Naive thymus-derived CD4-positive, alpha-beta T cell (primary cell): ENCODE measurements at regions of chr2 and their contacts with region 1.

Region 1: GRCh38 chr2:61764035-61764800 is 89.6 kb downstream of the FAM161A start:
- DNase-seq: peak; percentile 89 to 98 (median 97)
- ATAC-seq: peak; percentile 99
- H3K4me3 ChIP-seq: peak overlapping the region; percentile 71
- H3K4me3 Mint-ChIP-seq: peak overlapping the region; percentile 80 to 98 (median 95)
- H3K27ac ChIP-seq: peak overlapping the region; percentile 93
- H3K27ac Mint-ChIP-seq: peak overlapping the region; percentile 94 to 99 (median 98)
- H3K4me1 ChIP-seq: peaks cover 6 to 9% of the 10 kb centered on the region in 2 donors
- H3K4me1 Mint-ChIP-seq: peaks cover 0 to 16% (median 10%) of the 10 kb centered on the region in 7 donors
- H3K27me3 ChIP-seq: no peaks in the 10 kb centered on the region
- H3K27me3 Mint-ChIP-seq: peaks cover 0 to under 1% (median 0%) of the 10 kb centered on the region in 5 donors

Region 2: DNA sequence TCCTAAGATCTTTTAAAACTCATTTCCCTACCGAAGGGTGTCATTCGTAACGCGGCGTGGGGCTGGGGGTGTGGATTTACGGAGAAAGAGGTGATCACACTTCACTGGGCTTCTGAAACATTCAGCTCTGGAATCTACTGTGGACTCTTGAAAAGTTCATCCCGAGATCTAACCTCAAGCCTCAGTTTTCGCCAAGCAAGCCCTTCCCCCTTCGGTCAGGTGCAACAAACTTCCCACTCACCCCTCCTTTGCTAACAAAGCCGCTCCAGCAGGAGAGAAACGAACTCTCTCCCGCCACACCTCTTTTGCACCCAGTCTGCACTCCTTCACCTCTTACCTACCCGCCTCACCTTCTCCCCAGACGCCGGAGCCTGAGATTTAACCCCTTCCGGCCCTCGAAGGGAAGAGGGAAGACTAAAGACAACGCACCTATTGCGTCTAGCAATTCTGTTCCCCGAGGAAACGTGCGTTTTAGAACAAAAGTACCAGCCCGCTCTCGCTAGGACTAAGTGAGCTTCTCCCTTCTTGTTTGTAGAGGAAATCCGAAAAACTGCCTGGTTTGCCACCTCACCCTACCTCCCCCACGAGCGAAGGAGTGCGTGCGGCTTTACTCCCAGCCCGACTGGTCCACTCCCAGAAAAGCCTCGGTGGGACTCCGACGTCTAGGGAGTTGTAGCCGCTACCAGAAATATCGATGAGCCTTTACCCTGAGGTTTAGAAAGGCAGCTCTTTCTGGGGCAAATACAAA is 747.2 kb before region 1 on chr2:
- CTCF ChIA-PET with region 1: no interaction called
- POLR2A ChIA-PET with region 1: no interaction called
- intact Hi-C with region 1: loop called in 1 of 2 experiments (anchors 1 kb)
- DNase-seq: peak; percentile 41 to 75 (median 72)
- ATAC-seq: peak; percentile 79
- H3K4me3 ChIP-seq: peak overlapping the region; percentile 100
- H3K4me3 Mint-ChIP-seq: peak overlapping the region; percentile 93 to 100 (median 97)
- H3K27ac ChIP-seq: peak overlapping the region; percentile 75
- H3K27ac Mint-ChIP-seq: peak overlapping the region; percentile 90 to 99 (median 95)
- H3K4me1 ChIP-seq: peaks cover 14 to 20% of the 10 kb centered on the region in 2 donors
- H3K4me1 Mint-ChIP-seq: peaks cover 23 to 68% (median 48%) of the 10 kb centered on the region in 7 donors
- H3K27me3 ChIP-seq: no peaks in the 10 kb centered on the region
- H3K27me3 Mint-ChIP-seq: no peaks in the 10 kb centered on the region

Region 3: DNA sequence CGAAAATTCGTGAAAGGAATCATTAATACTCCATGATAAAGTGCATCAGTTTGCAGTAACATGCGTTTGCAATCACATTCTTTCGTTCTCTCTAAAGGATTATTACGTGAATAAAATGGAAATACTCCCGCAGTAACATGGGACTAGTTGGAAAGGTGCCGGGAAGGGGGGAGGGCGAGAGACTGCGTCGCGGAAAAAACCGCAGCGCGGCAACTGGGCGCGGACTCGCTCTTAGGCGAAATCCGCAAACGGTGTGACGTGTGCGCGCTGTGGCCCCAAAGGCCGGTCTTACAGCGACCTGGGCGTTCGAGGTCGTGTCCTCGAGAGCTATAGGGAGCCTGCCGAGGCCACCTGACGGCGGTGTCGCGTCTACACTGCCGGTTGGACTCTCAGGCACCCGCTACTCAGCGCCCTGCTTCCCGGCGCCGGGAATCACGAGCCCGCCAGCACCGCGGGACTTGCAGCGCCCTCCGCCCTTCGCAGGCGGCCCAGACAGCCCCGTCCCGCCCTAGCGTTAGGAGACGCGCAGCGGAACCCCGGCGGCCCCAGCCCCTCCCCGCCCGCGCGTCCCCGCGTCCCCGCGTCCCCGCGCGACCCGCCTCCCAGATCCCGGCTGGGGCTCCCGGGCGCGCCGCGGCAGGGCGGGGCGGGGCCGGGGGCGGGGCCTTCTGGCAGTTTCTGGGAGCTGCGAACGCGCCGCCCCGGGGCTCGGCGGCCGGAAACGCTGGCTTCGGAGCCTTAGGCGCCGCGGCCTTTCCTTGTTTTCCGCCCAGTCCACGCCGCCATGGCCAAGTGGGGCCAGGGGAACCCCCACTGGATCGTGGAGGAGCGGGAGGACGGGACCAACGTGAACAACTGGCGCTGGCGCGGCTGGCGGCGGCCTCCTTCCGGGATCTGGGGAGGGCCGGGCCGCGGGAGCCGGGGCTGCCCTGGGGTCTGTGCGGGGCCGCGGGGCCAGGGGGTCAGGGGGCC is 587.2 kb before region 1 on chr2:
- CTCF ChIA-PET with region 1: no interaction called
- POLR2A ChIA-PET with region 1: no interaction called
- intact Hi-C with region 1: loop called (anchors 1 kb)
- DNase-seq: peak; percentile 89 to 97 (median 93)
- ATAC-seq: peak; percentile 95
- H3K4me3 ChIP-seq: peak overlapping the region; percentile 82
- H3K4me3 Mint-ChIP-seq: peak overlapping the region; percentile 90 to 100 (median 94)
- H3K27ac ChIP-seq: peak overlapping the region; percentile 97
- H3K27ac Mint-ChIP-seq: peak overlapping the region; percentile 89 to 97 (median 95)
- H3K4me1 ChIP-seq: peaks cover 27 to 41% of the 10 kb centered on the region in 2 donors
- H3K4me1 Mint-ChIP-seq: peaks cover 38 to 53% (median 48%) of the 10 kb centered on the region in 7 donors
- H3K27me3 ChIP-seq: no peaks in the 10 kb centered on the region
- H3K27me3 Mint-ChIP-seq: peaks cover 0 to 8% (median 0%) of the 10 kb centered on the region in 5 donors

Region 4: GRCh38 chr2:61694312-61695274 is 69.6 kb before region 1 on chr2:
- CTCF ChIA-PET with region 1: no interaction called
- POLR2A ChIA-PET with region 1: no interaction called
- intact Hi-C with region 1: loop called (anchors 1 kb)
- DNase-seq: peak; percentile 62 to 91 (median 77)
- ATAC-seq: peak; percentile 99
- H3K4me3 ChIP-seq: peak overlapping the region; percentile 74
- H3K4me3 Mint-ChIP-seq: peak overlapping the region; percentile 84 to 96 (median 91)
- H3K27ac ChIP-seq: peak overlapping the region; percentile 62
- H3K27ac Mint-ChIP-seq: peak overlapping the region; percentile 74 to 92 (median 87)
- H3K4me1 ChIP-seq: peaks cover 0 to 5% of the 10 kb centered on the region in 2 donors
- H3K4me1 Mint-ChIP-seq: peaks cover 4 to 19% (median 15%) of the 10 kb centered on the region in 7 donors
- H3K27me3 ChIP-seq: no peaks in the 10 kb centered on the region
- H3K27me3 Mint-ChIP-seq: peaks cover 0 to 4% (median 0%) of the 10 kb centered on the region in 5 donors

Region 5: DNA sequence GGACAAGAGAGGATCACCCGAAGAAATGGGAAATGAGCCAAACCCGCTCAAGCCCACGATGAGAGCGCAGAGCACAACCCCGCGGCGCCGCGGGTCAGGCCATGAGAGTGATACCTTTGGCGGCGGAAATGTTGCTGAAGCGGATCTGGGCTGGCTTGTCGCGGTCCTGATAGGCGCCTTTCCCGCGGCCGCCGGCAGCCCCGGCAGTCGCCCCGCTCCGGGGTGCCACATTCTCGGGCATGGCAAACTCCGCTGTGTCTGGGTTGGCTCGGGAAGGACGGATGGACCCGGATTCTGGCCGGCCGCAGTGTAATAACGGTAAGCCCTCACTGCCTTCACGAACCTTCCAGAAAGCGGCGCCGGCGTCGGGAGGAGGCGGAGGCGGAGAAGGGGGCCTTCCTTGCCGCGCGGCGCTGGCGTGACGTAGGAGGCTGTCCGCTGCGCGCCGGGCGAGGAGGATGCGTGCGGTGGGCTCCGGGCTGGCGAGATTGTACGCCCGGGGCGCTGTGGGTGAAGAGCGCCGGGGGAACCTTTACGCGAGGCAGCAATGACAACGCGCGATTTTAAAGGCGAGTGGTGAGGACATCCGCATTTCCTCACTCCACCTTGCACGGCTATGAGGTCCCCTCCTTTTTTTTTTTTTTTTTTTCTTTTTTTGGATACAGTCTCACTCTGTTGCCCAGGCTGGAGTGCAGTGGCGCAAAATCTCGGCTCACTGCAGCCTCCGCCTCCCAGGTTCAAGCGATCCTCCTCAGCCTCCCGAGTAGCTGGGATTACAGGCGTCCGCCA is 124.2 kb after region 1 on chr2 and contains the start of gene CCT4:
- CTCF ChIA-PET with region 1: no interaction called
- POLR2A ChIA-PET with region 1: interaction called, 4 read pairs
- intact Hi-C with region 1: loop called (anchors 1 kb)
- DNase-seq: peak; percentile 86 to 99 (median 95)
- ATAC-seq: peak; percentile 94
- H3K4me3 ChIP-seq: peak within 1 kb of the TSS; percentile 92
- H3K4me3 Mint-ChIP-seq: peak within 1 kb of the TSS; percentile 85 to 100 (median 99)
- H3K27ac ChIP-seq: peak within 1 kb of the TSS; percentile 98
- H3K27ac Mint-ChIP-seq: peak within 1 kb of the TSS; percentile 98 to 100 (median 100)
- H3K4me1 ChIP-seq: peaks cover 15 to 17% of the 10 kb centered on the region in 2 donors
- H3K4me1 Mint-ChIP-seq: peaks cover 11 to 34% (median 29%) of the 10 kb centered on the region in 7 donors
- H3K27me3 ChIP-seq: no peaks in the 10 kb centered on the region
- H3K27me3 Mint-ChIP-seq: no peaks in the 10 kb centered on the region
- total RNA-seq, gene CCT4: 84.2 to 177 (median 90.3) TPM

Region 6: DNA sequence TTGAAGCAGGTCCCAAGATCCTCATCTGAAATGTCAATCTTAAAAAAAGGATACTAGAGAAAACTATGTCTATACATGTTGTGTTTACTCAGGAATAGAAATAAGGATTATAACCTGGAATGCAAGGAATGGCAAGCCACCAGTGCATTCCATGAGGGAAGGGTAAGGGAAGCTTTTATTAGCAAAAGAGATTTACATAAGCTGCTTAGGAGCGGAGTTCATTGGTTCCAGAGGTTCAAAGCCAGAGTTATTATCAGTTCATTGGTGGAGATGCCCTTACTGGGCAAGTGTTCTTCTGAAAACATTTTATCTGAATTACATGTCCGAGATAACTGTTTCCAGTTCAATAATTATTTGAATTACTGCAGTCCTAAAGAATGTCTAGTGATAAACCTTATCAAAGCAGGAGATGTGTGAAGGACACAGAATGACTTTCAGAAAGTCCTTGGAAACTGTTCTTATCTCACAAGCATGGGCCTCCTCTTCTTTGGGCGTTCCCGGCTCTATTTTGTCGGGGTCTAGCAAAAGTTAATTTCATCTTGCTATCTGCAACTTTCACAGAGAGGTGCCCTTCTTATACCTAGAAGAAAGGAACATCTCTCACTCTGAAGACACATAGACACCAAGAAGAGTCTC is 164.7 kb after region 1 on chr2:
- CTCF ChIA-PET with region 1: no interaction called
- POLR2A ChIA-PET with region 1: no interaction called
- intact Hi-C with region 1: no loop called
- DNase-seq: no peak
- ATAC-seq: no peak
- H3K4me3 ChIP-seq: no peak overlapping the region
- H3K4me3 Mint-ChIP-seq: no peak overlapping the region
- H3K27ac ChIP-seq: no peak overlapping the region
- H3K27ac Mint-ChIP-seq: no peak overlapping the region
- H3K4me1 ChIP-seq: no peaks in the 10 kb centered on the region
- H3K4me1 Mint-ChIP-seq: peaks cover 0 to 6% (median 0%) of the 10 kb centered on the region in 7 donors
- H3K27me3 ChIP-seq: no peaks in the 10 kb centered on the region
- H3K27me3 Mint-ChIP-seq: no peaks in the 10 kb centered on the region